ENCODE measurements at regions of chr10 and their contacts with region 1.

Region 1: DNA sequence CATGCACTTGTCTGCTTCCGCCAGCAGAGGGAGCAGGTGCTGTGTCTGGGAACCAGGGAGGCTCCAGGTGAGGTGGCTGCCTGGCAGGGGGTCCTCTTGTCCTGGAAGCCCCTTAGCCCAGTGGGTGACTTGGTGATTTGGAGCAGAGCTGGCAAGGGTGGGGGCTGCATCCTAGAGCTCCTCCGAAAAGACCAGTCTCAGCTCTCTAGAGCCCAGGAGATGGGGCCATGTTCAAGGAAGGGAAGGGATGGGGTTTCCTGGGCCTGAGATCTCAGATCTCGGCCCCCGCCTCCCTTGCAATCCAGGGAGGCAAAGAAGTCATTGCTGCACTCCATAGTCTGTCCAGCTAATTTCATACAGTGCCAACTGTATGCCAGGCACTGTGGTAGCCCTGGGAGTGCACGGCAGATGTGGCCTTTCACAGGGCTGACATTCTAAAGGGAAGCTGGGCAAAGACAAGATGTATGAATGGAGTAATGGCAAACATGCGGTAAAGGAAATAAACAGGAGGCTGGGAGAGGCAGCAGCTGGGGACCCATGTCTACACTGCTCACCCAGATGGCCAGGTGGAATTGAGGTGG is 20.4 kb upstream of the SFRP5 start:
- DNase-seq: peak; percentile 33 to 67 (median 53)
- H3K4me3 ChIP-seq: no peak overlapping the region
- H3K27ac ChIP-seq: no peak overlapping the region
- H3K4me1 ChIP-seq: peaks cover 0 to 14% (median 10%) of the 10 kb centered on the region in 4 experiments
- H3K27me3 ChIP-seq: peaks cover 0 to 11% (median 2%) of the 10 kb centered on the region in 5 experiments

Region 2: GRCh38 chr10:97766996-97767924 is 25.0 kb before region 1 on chr10:
- CTCF ChIA-PET with region 1: interaction called, 13 read pairs
- POLR2A ChIA-PET with region 1: no interaction called
- DNase-seq: no peak
- H3K4me3 ChIP-seq: no peak overlapping the region
- H3K27ac ChIP-seq: no peak overlapping the region
- H3K4me1 ChIP-seq: peaks cover 0 to 24% (median 13%) of the 10 kb centered on the region in 4 experiments
- H3K27me3 ChIP-seq: peaks cover 3 to 34% (median 16%) of the 10 kb centered on the region in 5 experiments

Region 3: DNA sequence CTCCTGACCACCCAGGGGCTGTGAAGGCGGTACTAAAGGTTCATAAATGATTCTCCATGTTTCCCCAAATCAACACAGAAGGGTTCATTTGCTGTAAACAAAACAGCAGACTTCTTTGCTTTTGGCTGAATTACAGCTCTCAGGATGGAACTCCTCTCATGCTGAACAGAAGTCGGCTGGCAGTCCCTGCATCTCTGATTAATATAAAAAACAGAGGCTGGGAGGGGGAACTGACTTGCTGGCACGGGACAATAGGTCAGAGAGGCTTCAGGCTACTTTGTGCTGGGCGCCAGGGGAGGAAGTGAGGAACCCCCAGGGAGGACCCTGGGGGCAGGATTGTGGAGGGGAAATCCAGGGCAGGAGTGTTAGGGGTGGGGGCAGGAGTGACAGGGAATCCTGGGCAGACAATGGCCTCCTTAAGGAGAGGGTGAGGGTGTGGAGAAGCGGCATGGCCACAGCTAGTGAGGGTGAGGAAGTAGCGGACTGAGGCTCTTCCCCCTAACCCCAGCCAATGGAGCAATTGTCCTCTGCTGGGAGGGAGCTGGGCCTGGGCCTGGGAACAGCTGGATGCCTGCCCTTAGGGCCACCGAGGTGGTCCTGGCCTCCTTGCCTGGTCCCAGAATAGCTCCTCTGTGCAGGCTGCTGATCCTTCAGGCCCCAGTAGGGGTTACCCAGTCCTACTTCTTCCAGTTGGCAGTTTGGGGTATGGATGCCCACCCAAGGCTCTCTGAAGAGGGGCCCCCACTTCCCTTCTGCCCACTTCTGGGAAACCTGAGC is 11.2 kb before region 1 on chr10:
- CTCF ChIA-PET with region 1: interaction called, 13 read pairs
- POLR2A ChIA-PET with region 1: no interaction called
- DNase-seq: no peak
- H3K4me3 ChIP-seq: no peak overlapping the region
- H3K27ac ChIP-seq: no peak overlapping the region
- H3K4me1 ChIP-seq: peaks cover 0 to 21% (median 12%) of the 10 kb centered on the region in 4 experiments
- H3K27me3 ChIP-seq: no peaks in the 10 kb centered on the region

Region 4: GRCh38 chr10:97861097-97861750 is 69.0 kb after region 1 on chr10:
- CTCF ChIA-PET with region 1: interaction called, 12 read pairs
- POLR2A ChIA-PET with region 1: no interaction called
- DNase-seq: no peak
- H3K4me3 ChIP-seq: no peak overlapping the region
- H3K27ac ChIP-seq: no peak overlapping the region
- H3K4me1 ChIP-seq: peaks cover 0 to 12% (median 9%) of the 10 kb centered on the region in 4 experiments
- H3K27me3 ChIP-seq: peaks cover 0 to 9% (median 3%) of the 10 kb centered on the region in 5 experiments